ENCODE measurements at regions of chr4 and their contacts with region 1.

Region 1: DNA sequence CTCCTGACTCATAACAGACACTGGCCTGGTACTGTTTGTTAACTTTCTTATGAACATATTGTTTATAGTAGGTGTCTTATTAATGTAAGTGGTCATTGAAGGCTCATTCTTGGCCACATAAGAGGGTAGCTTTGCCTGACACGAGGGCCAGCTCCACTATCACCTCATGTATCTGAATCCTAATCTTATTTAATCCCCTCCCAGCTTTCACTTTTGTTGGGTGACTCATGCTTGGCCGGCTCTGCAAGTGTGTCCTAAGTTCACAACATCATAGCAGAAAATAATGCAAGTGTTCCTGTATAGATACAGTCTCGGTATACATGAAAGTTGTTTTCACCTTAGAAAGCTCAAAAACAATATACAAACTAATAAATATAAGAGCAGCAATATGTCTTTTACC is 283.8 kb downstream of the IQCM start:
- DNase-seq: no peak
- H3K4me3 ChIP-seq: no peak overlapping the region
- H3K27ac ChIP-seq: no peak overlapping the region
- H3K4me1 ChIP-seq: no peaks in the 10 kb centered on the region
- H3K27me3 ChIP-seq: no peaks in the 10 kb centered on the region
- CTCF ChIP-seq: no peak
- EP300 ChIP-seq: no peak
- POLR2A ChIP-seq: no peak
- RAD21 ChIP-seq: no peak

Region 2: DNA sequence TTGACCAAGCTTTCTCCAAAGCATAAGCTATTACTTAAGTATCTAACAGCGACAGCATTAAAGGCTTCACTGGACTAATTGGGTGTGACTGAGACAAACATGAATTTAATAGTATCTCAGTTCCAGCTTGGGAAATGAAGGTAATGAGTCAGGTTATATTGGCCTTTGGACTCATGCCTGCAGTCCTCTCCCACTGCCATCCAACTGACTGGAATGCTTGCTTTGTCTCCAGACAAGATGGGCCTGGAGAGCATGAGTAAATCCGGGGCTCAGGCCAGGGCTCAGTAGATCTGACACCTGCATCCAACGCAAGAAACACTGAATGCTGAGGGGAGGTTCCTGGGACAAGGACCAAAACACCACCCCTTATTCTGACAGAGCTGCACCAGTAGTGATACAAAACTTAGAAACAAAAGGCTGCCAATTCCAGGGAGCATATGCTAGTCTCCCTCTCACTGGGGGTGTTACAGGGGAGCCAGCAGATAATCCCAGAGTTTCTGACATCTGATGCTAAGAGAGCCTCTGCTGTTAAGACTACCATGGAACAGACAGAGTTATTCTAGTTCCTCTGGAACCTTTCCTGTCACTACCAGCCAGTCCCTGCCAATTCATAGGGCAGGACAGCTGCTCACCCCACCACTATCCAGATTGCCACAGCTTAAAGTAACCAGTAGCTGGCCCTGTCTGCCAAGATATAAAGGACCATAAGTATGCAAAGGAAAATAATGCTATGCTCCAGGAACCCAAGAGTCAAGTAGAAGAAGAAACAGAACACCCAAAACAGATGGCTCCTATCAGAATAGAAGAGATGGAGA is 10.0 kb before region 1 on chr4:
- CTCF ChIA-PET with region 1: interaction called, 12 read pairs
- POLR2A ChIA-PET with region 1: no interaction called
- DNase-seq: no peak
- H3K4me3 ChIP-seq: no peak overlapping the region
- H3K27ac ChIP-seq: no peak overlapping the region
- H3K4me1 ChIP-seq: no peaks in the 10 kb centered on the region
- H3K27me3 ChIP-seq: no peaks in the 10 kb centered on the region
- CTCF ChIP-seq: no peak
- EP300 ChIP-seq: no peak
- POLR2A ChIP-seq: no peak
- RAD21 ChIP-seq: no peak